ENCODE measurements at regions of chr10 and their contacts with region 1.

Region 1: GRCh38 chr10:21002097-21002878 is 105.2 kb upstream of the NEBL start:
- DNase-seq: no peak
- ATAC-seq: no peak
- H3K4me3 ChIP-seq: no peak overlapping the region
- H3K27ac ChIP-seq: no peak overlapping the region
- H3K4me1 ChIP-seq: peaks cover 0 to 13% (median 2%) of the 10 kb centered on the region in 12 donors
- H3K27me3 ChIP-seq: no peaks in the 10 kb centered on the region
- CTCF ChIP-seq: no peak
- POLR2A ChIP-seq: no peak

Region 2: GRCh38 chr10:20768843-20769242 is 233.4 kb before region 1 on chr10:
- intact Hi-C with region 1: no loop called
- DNase-seq: no peak
- ATAC-seq: peak in 1 of 4 donors; percentile 40
- H3K4me3 ChIP-seq: no peak overlapping the region
- H3K27ac ChIP-seq: no peak overlapping the region
- H3K4me1 ChIP-seq: peaks cover 0 to 11% (median 0%) of the 10 kb centered on the region in 12 donors
- H3K27me3 ChIP-seq: no peaks in the 10 kb centered on the region
- CTCF ChIP-seq: peak; percentile 31 to 74 (median 58)
- POLR2A ChIP-seq: no peak

Region 3: DNA sequence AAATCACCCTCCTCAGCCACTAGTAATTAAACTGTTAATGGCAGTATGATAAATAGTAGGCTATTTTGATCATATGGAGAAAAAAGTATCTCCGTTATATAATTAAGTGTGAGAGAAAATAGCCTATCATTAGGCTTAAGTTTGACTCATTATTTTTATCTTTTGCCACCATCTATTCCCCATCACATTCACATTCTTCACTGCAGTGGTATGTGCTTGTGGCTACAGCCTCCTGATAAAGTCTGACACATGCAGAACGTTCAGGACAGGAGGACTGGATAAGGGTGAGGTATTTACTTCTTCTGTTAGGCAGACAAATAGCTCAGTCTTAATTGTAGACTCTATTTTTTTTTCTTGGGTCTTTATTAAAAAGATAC is 111.0 kb before region 1 on chr10:
- intact Hi-C with region 1: loop called in 2 of 10 experiments (anchors 5 to 10 kb)
- DNase-seq: no peak
- ATAC-seq: peak; percentile 39 to 56 (median 48)
- H3K4me3 ChIP-seq: peak overlapping the region in 10 of 12 donors; percentile 6 to 67 (median 46)
- H3K27ac ChIP-seq: peak overlapping the region in 11 of 12 donors; percentile 35 to 95 (median 84)
- H3K4me1 ChIP-seq: peaks cover 0 to 19% (median 0%) of the 10 kb centered on the region in 12 donors
- H3K27me3 ChIP-seq: no peaks in the 10 kb centered on the region
- CTCF ChIP-seq: no peak
- POLR2A ChIP-seq: no peak

Region 4: DNA sequence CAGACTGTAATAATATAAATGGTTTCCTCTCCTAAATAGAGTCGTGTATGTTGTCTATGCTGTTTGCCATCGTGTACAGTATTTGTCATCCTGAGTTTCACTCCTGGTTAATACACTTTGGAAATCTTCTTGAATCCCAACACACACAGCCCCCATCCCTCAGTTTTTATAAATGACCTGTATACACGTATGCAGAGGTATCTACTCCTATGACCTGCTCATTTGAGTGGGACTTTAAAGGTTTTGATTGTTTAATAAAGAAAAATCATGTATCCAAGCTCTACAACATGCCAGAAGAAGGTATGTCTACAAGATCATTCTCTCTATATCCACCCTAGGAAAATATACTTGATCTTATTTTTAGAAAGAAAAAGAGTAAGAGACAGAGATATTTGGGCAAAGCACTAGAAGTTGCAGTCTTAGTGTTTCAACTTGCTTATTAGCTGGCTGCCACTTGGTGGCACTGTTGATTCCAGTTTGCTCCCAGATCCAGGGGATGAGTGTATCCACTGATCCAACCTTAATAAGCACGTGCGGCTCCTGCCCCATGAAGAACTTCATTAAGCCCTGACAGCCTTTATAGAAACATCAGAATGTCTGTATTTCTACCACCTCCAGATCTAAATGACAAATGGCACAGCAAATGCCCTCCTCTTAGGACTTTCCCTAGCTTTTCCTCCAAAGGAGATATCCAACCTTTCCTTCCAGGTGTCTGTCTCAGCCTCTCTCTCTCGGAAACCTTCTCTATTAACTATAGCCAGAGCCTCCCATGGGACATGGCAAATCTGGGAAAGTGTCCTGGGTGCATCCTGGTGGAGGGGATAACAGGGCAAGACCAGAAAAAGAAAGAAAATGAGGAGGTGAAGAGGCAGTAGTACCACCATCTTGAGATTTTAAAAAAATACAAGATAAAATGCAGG is 76.4 kb after region 1 on chr10:
- intact Hi-C with region 1: no loop called
- DNase-seq: peak in 4 of 5 donors; percentile 62 to 67 (median 65)
- ATAC-seq: peak; percentile 73 to 91 (median 79)
- H3K4me3 ChIP-seq: no peak overlapping the region
- H3K27ac ChIP-seq: peak overlapping the region in 6 of 12 donors; percentile 9 to 68 (median 49)
- H3K4me1 ChIP-seq: peaks cover 0 to 11% (median 0%) of the 10 kb centered on the region in 12 donors
- H3K27me3 ChIP-seq: no peaks in the 10 kb centered on the region
- CTCF ChIP-seq: peak; percentile 60 to 88 (median 77)
- POLR2A ChIP-seq: no peak

Region 5: DNA sequence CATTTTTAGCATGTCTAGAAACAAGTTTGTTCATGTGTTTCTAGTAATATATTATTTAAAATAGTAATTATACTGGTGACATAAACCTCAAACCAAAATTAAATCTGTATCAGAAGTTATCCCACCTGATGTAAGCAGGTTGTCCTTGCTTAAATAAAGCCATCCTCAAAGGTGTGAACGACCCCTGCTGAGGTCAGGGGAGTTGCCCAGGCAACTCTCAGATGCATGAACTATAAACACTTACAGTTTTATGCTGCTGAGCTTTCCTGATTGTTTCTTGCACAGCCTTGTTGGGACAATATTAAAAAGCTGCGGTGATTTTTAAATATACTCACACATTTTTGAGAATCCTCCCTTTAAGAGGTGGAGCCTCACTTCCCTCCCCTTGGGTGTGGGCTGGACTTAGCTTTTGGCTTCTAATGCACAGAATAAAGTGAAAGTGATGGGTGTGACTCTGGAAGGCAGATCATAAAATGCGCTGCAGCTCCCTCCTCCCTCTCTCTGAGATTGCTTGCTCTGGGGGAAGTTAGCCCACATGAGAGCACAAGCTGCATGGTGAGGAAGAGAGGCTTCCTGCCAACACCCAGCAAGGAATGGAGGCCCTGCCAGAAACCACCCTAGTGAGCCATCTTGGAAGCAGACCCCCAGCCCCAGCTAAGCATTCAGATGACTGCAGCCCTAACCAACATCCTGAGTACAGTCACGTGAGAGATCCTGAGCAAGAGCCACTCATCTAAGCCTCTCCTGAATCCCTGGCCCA is 370.5 kb after region 1 on chr10:
- intact Hi-C with region 1: no loop called
- DNase-seq: peak in 4 of 5 donors; percentile 33 to 51 (median 44)
- ATAC-seq: peak; percentile 58 to 95 (median 94)
- H3K4me3 ChIP-seq: peak overlapping the region in 4 of 12 donors; percentile 0 to 35 (median 26)
- H3K27ac ChIP-seq: peak overlapping the region in 5 of 12 donors; percentile 13 to 75 (median 41)
- H3K4me1 ChIP-seq: peaks cover 0 to 20% (median 9%) of the 10 kb centered on the region in 12 donors
- H3K27me3 ChIP-seq: no peaks in the 10 kb centered on the region
- CTCF ChIP-seq: no peak
- POLR2A ChIP-seq: no peak